Dendritic cell treated with granulocyte-macrophage colony-stimulating factor and Interleukin-4, amounts not matched to agents 40 ng/mL and 50 ng/mL, for 4 days (primary cell): ENCODE measurements at regions of chr21 and their contacts with region 1.

Region 1: DNA sequence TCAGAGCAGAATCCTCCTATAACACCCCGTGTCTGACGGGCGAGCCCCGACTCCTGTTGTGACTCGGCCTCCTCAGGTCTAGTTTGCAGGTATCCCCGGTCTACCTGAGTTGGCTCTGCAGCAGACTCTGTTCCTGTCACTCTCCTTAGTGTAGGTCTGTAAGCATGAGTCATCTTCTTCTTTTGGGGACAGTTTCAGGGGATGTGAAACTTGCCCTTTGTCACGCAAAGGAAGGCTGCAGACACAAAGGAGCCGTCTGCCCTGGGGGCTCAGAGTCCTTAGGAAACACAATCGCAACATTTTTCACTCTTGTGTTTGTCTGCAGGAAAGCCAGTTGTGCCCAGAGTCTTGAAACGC is 183.2 kb downstream of the RUNX1 start:
- H3K4me3 Mint-ChIP-seq: peak overlapping the region; percentile 44
- H3K27ac Mint-ChIP-seq: peak overlapping the region; percentile 81
- H3K4me1 Mint-ChIP-seq: peaks cover 91% of the 10 kb centered on the region
- H3K27me3 Mint-ChIP-seq: peaks cover 1% of the 10 kb centered on the region

Region 2: GRCh38 chr21:34850166-34850690 is 15.7 kb before region 1 on chr21:
- intact Hi-C with region 1: loop called (anchors 2 kb)
- H3K4me3 Mint-ChIP-seq: no peak overlapping the region
- H3K27ac Mint-ChIP-seq: no peak overlapping the region
- H3K4me1 Mint-ChIP-seq: peaks cover 51% of the 10 kb centered on the region
- H3K27me3 Mint-ChIP-seq: no peaks in the 10 kb centered on the region